Right ventricle myocardium inferior (tissue), 1 donor: ENCODE measurements at regions of chr12 and their contacts with region 1.

Region 1: GRCh38 chr12:110501752-110502738 is at the starts of genes RAD9B and VPS29:
- DNase-seq: peak; percentile 99
- ATAC-seq: peak; percentile 99
- total RNA-seq, gene RAD9B: 1.1 TPM
- total RNA-seq, gene VPS29: 106 TPM

Region 2: DNA sequence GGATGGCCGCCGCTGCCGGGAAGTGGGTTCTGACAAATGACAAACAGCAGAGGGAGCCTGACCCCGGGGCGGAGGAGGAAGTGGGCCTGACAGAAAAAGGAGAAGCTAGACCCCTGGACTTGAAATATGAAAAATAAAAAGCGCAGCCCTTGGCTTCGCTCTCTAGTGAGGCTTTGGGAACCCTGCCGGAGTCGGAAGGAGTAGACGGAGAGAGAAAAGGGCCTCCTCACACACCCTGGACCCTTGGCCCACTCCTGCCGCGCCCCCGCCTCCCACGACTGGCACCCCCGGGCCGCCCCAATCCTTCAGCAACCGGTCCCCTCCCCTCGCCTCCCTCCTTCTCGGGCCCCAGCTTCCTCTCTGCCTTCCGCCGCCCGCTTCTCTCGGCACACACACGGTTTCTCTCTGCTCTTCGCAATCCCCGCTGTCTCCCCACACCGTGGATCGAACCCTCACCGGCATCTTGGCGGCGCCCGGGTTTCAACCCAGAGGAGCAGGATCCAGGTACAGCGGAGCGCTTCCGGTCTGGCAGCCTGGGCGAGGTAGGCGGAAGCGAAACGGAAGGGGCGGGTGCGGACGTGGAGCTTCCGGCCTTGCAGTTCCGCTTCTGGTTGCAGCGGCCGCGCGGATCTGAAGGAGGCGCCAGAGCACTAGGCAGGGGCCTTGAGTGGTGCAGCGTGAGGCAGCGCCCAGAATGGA is 52.1 kb before region 1 on chr12 and contains the start of gene ARPC3:
- intact Hi-C with region 1: loop called (anchors 5 kb)
- DNase-seq: peak; percentile 98
- ATAC-seq: peak; percentile 99
- total RNA-seq, gene ARPC3: 94.4 TPM

Region 3: GRCh38 chr12:110468212-110469048 is 33.6 kb before region 1 on chr12 and contains the starts of genes FAM216A and GPN3:
- intact Hi-C with region 1: loop called (anchors 2 kb)
- DNase-seq: peak; percentile 98
- ATAC-seq: peak; percentile 96
- total RNA-seq, gene FAM216A: 4.8 TPM
- total RNA-seq, gene GPN3: 24.7 TPM